ENCODE measurements at regions of chr14 and their contacts with region 1.

Region 1: GRCh38 chr14:68926236-68926635 is 52.9 kb downstream of the ACTN1 start:
- DNase-seq: peak; percentile 51
- ATAC-seq: no peak
- H3K4me3 Mint-ChIP-seq: no peak overlapping the region
- H3K27ac Mint-ChIP-seq: no peak overlapping the region
- H3K4me1 Mint-ChIP-seq: peaks cover 45% of the 10 kb centered on the region
- H3K27me3 Mint-ChIP-seq: no peaks in the 10 kb centered on the region

Region 2: GRCh38 chr14:68589447-68590220 is 336.6 kb before region 1 on chr14:
- CTCF ChIA-PET with region 1: no interaction called
- POLR2A ChIA-PET with region 1: no interaction called
- intact Hi-C with region 1: no loop called
- DNase-seq: no peak
- ATAC-seq: no peak
- H3K4me3 Mint-ChIP-seq: no peak overlapping the region
- H3K27ac Mint-ChIP-seq: no peak overlapping the region
- H3K4me1 Mint-ChIP-seq: peaks cover 12% of the 10 kb centered on the region
- H3K27me3 Mint-ChIP-seq: no peaks in the 10 kb centered on the region

Region 3: GRCh38 chr14:68871392-68871791 is 54.8 kb before region 1 on chr14:
- CTCF ChIA-PET with region 1: no interaction called
- POLR2A ChIA-PET with region 1: no interaction called
- intact Hi-C with region 1: no loop called
- DNase-seq: no peak
- ATAC-seq: no peak
- H3K4me3 Mint-ChIP-seq: no peak overlapping the region
- H3K27ac Mint-ChIP-seq: no peak overlapping the region
- H3K4me1 Mint-ChIP-seq: no peaks in the 10 kb centered on the region
- H3K27me3 Mint-ChIP-seq: no peaks in the 10 kb centered on the region

Region 4: GRCh38 chr14:68939893-68940613 is 13.8 kb after region 1 on chr14:
- CTCF ChIA-PET with region 1: interaction called, 10 read pairs
- POLR2A ChIA-PET with region 1: interaction called, 3 read pairs
- intact Hi-C with region 1: no loop called
- DNase-seq: no peak
- ATAC-seq: no peak
- H3K4me3 Mint-ChIP-seq: no peak overlapping the region
- H3K27ac Mint-ChIP-seq: no peak overlapping the region
- H3K4me1 Mint-ChIP-seq: peaks cover 80% of the 10 kb centered on the region
- H3K27me3 Mint-ChIP-seq: no peaks in the 10 kb centered on the region